ENCODE measurements at regions of chr10 and their contacts with region 1.

Region 1: DNA sequence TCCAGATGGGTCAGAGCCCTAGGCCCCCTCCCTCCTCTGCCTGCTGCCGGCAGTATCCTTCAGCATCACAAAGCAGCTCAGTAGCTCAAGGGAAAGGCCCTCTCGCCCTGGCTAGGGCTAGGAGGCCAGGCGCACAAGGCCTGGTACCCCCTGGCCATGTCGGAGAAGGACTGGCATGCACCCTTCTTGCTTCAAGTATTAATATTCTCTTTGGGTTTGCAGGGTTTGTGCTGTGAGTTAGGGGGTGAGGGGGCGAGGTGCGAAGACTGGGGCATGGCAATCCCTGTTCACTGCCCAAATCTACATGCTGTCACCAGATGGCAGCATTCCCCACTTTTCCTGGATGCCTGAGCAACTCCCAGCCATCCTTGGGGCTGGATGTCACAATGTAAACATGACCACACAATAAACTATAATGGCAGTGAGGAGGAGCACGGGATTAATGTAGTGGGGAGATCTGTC is 105.2 kb downstream of the NEURL1 start:
- DNase-seq: peak; percentile 67 to 76
- H3K4me3 ChIP-seq: no peak overlapping the region
- H3K27ac ChIP-seq: peak overlapping the region; percentile 54 to 65
- H3K4me1 ChIP-seq: no peaks in the 10 kb centered on the region
- H3K27me3 ChIP-seq: no peaks in the 10 kb centered on the region
- CTCF ChIP-seq: peak; percentile 61 to 83 (median 71)
- POLR2A ChIP-seq: no peak

Region 2: GRCh38 chr10:102894466-102895213 is 704.0 kb before region 1 on chr10:
- intact Hi-C with region 1: no loop called
- DNase-seq: no peak
- H3K4me3 ChIP-seq: no peak overlapping the region
- H3K27ac ChIP-seq: no peak overlapping the region
- H3K4me1 ChIP-seq: no peaks in the 10 kb centered on the region
- H3K27me3 ChIP-seq: no peaks in the 10 kb centered on the region
- CTCF ChIP-seq: no peak
- POLR2A ChIP-seq: no peak

Region 3: GRCh38 chr10:103685880-103686669 is 87.4 kb after region 1 on chr10:
- intact Hi-C with region 1: loop called (anchors 5 kb)
- DNase-seq: peak; percentile 91 to 92
- H3K4me3 ChIP-seq: no peak overlapping the region
- H3K27ac ChIP-seq: peak overlapping the region; percentile 81 to 87
- H3K4me1 ChIP-seq: no peaks in the 10 kb centered on the region
- H3K27me3 ChIP-seq: no peaks in the 10 kb centered on the region
- CTCF ChIP-seq: peak; percentile 94 to 97 (median 96)
- POLR2A ChIP-seq: no peak

Region 4: GRCh38 chr10:103859161-103860086 is 260.7 kb after region 1 on chr10:
- intact Hi-C with region 1: loop called (anchors 5 kb)
- DNase-seq: peak; percentile 66 to 73
- H3K4me3 ChIP-seq: no peak overlapping the region
- H3K27ac ChIP-seq: no peak overlapping the region
- H3K4me1 ChIP-seq: no peaks in the 10 kb centered on the region
- H3K27me3 ChIP-seq: no peaks in the 10 kb centered on the region
- CTCF ChIP-seq: peak; percentile 73 to 91 (median 84)
- POLR2A ChIP-seq: no peak